ENCODE measurements at regions of chr5 and their contacts with region 1.

Region 1: DNA sequence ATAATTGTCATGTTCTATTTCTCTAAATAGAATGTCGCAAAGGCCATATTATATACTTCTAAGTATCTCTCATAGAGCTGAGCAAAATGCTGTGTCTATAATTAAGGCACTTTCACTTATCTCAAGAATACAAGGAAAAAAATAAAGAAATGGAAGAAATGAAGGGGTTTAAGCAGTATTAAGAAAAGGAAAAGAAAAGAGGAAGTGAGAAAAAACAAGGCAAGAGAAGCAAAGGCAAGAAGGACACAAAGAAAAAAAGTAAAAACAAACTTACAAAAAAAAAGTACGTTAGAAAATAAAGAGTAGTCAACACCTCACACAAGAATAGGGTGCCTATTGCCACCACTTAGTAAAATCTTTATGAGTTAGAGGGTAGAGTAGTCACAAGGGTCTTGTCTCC is 506.2 kb downstream of the GABRG2 start:
- DNase-seq: no peak
- H3K4me3 Mint-ChIP-seq: no peak overlapping the region
- H3K27ac Mint-ChIP-seq: no peak overlapping the region
- H3K4me1 Mint-ChIP-seq: peaks cover 7% of the 10 kb centered on the region
- H3K27me3 Mint-ChIP-seq: no peaks in the 10 kb centered on the region
- CTCF ChIP-seq: no peak

Region 2: DNA sequence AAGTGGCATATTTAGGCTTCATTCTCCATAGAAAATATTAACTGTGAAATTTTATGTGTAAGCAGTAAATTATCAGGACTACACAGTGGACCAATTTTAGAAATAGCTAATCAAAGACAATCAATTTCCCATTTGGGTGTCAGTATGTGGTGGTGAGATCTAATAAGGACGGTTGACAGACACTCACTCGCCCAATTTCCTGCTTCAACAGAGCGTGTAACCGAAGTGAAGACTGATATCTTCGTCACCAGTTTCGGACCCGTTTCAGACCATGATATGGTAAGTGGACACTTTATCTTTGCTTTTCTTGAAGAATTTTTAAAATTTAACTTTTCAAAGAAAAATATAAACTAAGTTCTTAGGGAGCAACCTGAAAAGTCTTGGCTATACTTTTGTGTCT is 708.2 kb before region 1 on chr5:
- CTCF ChIA-PET with region 1: no interaction called
- POLR2A ChIA-PET with region 1: no interaction called
- intact Hi-C with region 1: loop called (anchors 5 kb)
- DNase-seq: no peak
- H3K4me3 Mint-ChIP-seq: no peak overlapping the region
- H3K27ac Mint-ChIP-seq: no peak overlapping the region
- H3K4me1 Mint-ChIP-seq: no peaks in the 10 kb centered on the region
- H3K27me3 Mint-ChIP-seq: peaks cover 84% of the 10 kb centered on the region
- CTCF ChIP-seq: no peak

Region 3: DNA sequence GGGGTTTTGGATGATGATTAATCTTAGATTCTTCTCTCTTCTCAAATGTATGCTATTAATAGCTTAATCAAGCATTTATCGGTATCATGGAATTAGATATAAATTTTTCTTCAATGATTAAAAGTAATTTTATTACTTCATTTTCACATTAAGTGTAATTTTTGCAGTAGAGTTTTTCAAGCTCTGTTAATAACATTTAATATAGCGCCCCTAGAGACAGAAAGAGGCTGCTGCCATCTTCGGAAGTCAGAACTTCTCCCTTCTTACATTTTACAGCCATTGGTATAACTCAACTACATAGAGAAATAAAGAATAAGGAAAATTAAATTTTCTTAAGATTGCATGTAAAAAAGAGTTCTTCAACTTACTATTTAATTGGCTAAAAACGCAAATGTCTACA is 34.1 kb after region 1 on chr5:
- CTCF ChIA-PET with region 1: no interaction called
- POLR2A ChIA-PET with region 1: no interaction called
- intact Hi-C with region 1: no loop called
- DNase-seq: no peak
- H3K4me3 Mint-ChIP-seq: no peak overlapping the region
- H3K27ac Mint-ChIP-seq: no peak overlapping the region
- H3K4me1 Mint-ChIP-seq: no peaks in the 10 kb centered on the region
- H3K27me3 Mint-ChIP-seq: no peaks in the 10 kb centered on the region
- CTCF ChIP-seq: no peak